Endothelial cell of umbilical vein (primary cell): ENCODE measurements at regions of chr3 and their contacts with region 1.

Region 1: GRCh38 chr3:192566706-192567290 is 160.5 kb downstream of the FGF12 start:
- DNase-seq: peak; percentile 72
- H3K4me3 ChIP-seq: no peak overlapping the region
- H3K27ac ChIP-seq: no peak overlapping the region
- H3K4me1 ChIP-seq: no peaks in the 10 kb centered on the region
- H3K27me3 ChIP-seq: peaks cover 3 to 10% of the 10 kb centered on the region in 2 experiments
- CTCF ChIP-seq: peak; percentile 52
- POLR2A ChIP-seq: no peak

Region 2: GRCh38 chr3:192422321-192423002 is 144.3 kb before region 1 on chr3:
- CTCF ChIA-PET with region 1: no interaction called
- POLR2A ChIA-PET with region 1: no interaction called
- dilution Hi-C with region 1: no loop called
- intact Hi-C with region 1: no loop called
- DNase-seq: peak; percentile 27
- H3K4me3 ChIP-seq: no peak overlapping the region
- H3K27ac ChIP-seq: no peak overlapping the region
- H3K4me1 ChIP-seq: peaks cover 13% of the 10 kb centered on the region
- H3K27me3 ChIP-seq: no peaks in the 10 kb centered on the region
- CTCF ChIP-seq: no peak
- POLR2A ChIP-seq: no peak

Region 3: DNA sequence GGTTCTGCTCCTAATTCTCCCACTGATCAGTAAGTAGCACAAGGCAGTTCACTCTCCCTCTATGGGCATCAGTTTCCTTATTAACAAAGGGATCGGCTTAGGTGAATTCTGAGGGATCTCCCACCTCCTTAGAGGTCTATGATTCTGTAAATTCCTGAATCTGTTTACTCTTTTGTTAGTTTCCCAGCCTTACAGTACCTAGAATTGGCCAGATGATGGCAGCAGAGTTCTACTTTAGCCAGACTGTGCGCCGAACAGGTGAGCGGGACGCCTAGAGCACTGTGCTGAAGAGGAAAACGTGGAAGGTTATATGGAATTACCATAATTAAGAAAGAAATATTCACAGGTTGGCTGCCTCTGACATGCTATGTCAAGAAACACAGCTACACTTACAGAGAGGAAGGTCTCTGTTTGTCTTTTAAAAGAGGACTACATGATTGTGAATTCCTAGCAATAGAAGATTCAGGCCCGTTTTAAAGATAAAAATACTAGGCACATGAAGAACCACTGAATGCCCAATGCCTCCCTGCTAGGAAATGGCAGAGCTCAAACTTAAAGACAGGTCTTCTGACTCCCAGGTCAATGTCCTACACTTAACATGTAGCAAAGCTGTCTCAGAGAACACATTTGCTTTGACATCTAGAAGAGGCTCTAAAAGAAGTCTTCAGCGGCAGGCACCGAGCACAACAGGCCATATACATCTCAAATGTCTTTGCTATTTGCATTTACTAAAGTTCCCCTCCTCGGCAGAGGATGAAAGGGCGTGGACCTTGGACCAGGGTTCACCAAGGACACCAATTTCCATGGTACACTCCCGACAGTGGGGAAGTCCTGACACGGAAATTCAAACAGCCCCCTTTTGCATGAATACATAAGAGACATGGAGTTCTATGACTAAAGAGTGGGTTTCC is 99.3 kb before region 1 on chr3:
- CTCF ChIA-PET with region 1: interaction called, 4 read pairs
- POLR2A ChIA-PET with region 1: no interaction called
- dilution Hi-C with region 1: no loop called
- intact Hi-C with region 1: loop called (anchors 1 kb)
- DNase-seq: peak; percentile 61
- H3K4me3 ChIP-seq: no peak overlapping the region
- H3K27ac ChIP-seq: no peak overlapping the region
- H3K4me1 ChIP-seq: no peaks in the 10 kb centered on the region
- H3K27me3 ChIP-seq: peaks cover 9 to 17% of the 10 kb centered on the region in 2 experiments
- CTCF ChIP-seq: peak; percentile 77
- POLR2A ChIP-seq: no peak

Region 4: DNA sequence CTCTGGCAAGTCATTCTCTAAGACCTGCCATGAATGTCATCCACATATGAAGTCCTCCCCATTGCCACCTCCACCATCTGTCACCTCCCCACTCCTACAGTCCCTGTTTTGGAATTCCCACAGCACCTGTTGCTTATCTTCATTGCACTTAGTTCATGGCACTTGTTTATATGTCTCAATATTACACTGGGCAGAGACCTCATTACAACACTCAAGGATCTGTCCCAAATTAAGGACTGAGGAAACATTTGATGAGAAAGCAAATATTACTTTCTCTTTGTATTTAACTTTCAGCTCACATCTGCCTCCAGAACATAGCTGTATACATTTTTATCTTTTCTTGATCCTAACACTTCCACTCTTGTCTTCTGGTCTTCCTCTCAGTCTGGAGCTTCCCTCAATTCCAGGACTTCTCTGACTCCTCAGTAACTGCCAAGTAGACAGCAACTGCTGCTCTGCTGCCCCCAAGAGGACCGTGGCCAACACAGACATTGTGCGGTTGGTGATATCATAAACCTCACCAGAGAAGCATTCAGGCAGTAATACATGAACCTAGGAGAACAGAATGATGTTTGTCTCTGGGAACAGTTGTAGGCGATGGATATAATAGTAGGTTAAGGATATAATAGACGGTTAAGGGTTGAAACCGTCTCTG is 205.6 kb after region 1 on chr3:
- CTCF ChIA-PET with region 1: interaction called, 3 read pairs
- POLR2A ChIA-PET with region 1: no interaction called
- dilution Hi-C with region 1: no loop called
- intact Hi-C with region 1: loop called (anchors 1 kb)
- DNase-seq: peak; percentile 19
- H3K4me3 ChIP-seq: no peak overlapping the region
- H3K27ac ChIP-seq: no peak overlapping the region
- H3K4me1 ChIP-seq: no peaks in the 10 kb centered on the region
- H3K27me3 ChIP-seq: no peaks in the 10 kb centered on the region
- CTCF ChIP-seq: peak; percentile 24 to 48
- POLR2A ChIP-seq: no peak

Region 5: GRCh38 chr3:192802957-192803899 is 236.4 kb after region 1 on chr3:
- CTCF ChIA-PET with region 1: interaction called, 46 read pairs
- POLR2A ChIA-PET with region 1: no interaction called
- dilution Hi-C with region 1: no loop called
- intact Hi-C with region 1: loop called (anchors 1 kb)
- DNase-seq: peak; percentile 49
- H3K4me3 ChIP-seq: no peak overlapping the region
- H3K27ac ChIP-seq: no peak overlapping the region
- H3K4me1 ChIP-seq: no peaks in the 10 kb centered on the region
- H3K27me3 ChIP-seq: no peaks in the 10 kb centered on the region
- CTCF ChIP-seq: peak; percentile 29 to 51
- POLR2A ChIP-seq: no peak

Region 6: DNA sequence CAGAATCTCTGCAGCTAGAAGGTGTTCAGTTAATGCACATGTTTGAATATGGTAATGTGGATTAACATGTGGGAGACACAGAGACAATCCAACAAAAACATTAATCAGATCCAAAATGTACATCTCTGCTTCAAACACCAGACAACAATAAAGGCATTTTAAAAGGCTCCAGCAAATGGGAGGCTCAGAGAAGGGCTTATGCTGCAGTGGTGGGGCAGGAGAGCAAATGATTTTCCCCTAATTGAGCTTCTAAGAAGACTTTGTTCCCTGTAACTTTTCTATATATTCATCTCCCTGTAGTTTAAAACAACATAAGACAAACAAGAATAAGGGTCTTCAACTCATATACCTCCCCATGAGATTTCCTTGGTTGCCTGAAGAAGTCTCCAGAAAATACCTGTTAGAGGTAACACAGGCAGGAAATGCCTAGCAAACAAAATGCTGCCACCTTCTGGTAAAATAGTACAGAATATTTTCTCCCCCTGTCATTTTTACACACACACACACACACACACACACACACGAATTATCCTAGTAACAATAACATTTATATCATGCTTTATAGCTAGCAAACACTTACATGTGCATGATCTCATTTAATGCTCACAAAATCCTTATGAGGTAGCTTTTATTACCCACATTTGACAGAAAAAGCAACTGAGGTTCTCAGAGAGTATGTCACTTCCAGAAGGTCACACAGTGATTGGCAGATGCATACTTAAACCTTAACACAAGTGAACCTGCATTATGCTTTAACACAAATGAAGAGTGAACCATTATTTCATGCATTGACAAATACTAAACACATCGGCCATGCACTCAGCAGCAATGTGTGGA is 474.3 kb after region 1 on chr3:
- CTCF ChIA-PET with region 1: interaction called, 3 read pairs
- POLR2A ChIA-PET with region 1: no interaction called
- dilution Hi-C with region 1: no loop called
- intact Hi-C with region 1: loop called (anchors 2 kb)
- DNase-seq: peak; percentile 43
- H3K4me3 ChIP-seq: no peak overlapping the region
- H3K27ac ChIP-seq: no peak overlapping the region
- H3K4me1 ChIP-seq: no peaks in the 10 kb centered on the region
- H3K27me3 ChIP-seq: no peaks in the 10 kb centered on the region
- CTCF ChIP-seq: peak; percentile 15
- POLR2A ChIP-seq: no peak

Region 7: DNA sequence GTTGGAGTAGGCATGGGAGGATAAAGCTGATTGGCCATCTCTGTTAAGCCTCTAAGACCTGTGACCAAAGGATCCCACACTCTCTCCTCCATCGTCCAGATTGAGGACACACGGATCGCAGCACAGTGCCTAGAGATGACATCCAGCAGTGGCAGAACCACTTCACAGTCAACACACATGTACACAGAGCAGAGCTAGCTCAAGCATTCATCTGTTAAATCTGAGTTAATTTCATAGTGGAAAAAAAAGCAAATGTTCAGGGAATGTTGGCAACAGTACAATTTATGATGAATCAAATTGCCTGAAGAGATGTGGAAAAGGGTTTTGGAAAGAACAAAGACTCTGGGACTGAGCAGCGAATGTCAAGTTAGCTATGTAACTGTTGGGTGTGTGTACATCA is 566.2 kb after region 1 on chr3:
- CTCF ChIA-PET with region 1: no interaction called
- POLR2A ChIA-PET with region 1: no interaction called
- dilution Hi-C with region 1: no loop called
- intact Hi-C with region 1: no loop called
- DNase-seq: peak; percentile 4
- H3K4me3 ChIP-seq: no peak overlapping the region
- H3K27ac ChIP-seq: no peak overlapping the region
- H3K4me1 ChIP-seq: no peaks in the 10 kb centered on the region
- H3K27me3 ChIP-seq: peaks cover 0 to 5% of the 10 kb centered on the region in 2 experiments
- CTCF ChIP-seq: no peak
- POLR2A ChIP-seq: no peak

Region 8: DNA sequence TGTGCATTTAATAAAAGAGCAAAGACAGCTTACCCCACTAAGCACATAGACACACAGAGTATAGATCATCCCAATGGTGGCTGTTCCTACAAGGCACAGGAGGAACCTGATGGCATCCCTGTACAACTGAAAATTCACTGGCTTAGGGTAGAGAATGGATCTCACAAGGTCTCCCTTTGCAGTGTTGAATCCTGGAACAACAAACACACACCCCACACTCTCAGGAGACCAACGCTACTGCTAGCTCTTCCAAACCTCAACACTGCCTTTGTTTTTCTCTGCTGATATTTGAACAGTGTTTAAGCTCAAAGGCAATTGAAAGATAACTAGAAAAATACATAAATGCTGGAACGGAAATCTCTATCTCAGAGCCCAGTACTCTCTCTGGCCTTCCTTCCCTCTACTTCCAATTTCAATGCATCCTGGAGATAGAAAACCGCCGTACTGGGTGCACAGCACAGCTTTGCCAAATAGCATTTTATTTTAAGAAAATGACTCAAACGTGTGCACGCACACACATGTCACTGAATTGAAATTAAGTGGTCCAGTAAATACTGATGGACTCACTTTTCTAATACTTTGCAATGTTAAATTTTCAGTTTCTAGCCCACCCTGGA is 899.3 kb after region 1 on chr3:
- CTCF ChIA-PET with region 1: no interaction called
- POLR2A ChIA-PET with region 1: no interaction called
- dilution Hi-C with region 1: no loop called
- intact Hi-C with region 1: loop called (anchors 2 kb)
- DNase-seq: no peak
- H3K4me3 ChIP-seq: no peak overlapping the region
- H3K27ac ChIP-seq: no peak overlapping the region
- H3K4me1 ChIP-seq: peaks cover 5% of the 10 kb centered on the region
- H3K27me3 ChIP-seq: peaks cover 0 to 2% of the 10 kb centered on the region in 2 experiments
- CTCF ChIP-seq: no peak
- POLR2A ChIP-seq: no peak

Region 9: DNA sequence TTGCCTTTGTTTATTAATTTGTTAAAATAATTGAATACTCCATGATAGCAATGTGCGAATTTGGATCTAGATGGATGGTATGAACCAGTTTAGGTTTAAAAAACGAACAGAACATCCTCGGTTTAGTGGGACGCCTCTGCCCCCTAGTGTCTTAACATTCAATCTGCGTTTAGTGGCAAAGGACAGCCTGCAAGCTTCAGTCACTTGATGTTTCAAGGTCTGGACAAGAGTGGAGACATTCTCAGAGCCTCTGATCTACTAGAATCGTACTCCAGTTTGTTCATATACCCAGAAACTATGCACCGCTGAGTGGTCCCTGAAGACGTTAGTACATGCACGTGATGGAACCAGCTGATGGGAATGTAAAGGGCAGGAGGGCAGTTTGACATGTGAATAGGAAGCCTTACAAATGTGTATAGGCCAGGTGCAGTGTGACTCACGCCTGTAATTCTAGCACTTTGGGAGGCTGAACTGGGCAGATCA is 1005.7 kb after region 1 on chr3:
- CTCF ChIA-PET with region 1: interaction called, 18 read pairs
- POLR2A ChIA-PET with region 1: interaction called, 3 read pairs
- dilution Hi-C with region 1: no loop called
- intact Hi-C with region 1: loop called (anchors 1 kb)
- DNase-seq: peak; percentile 69
- H3K4me3 ChIP-seq: no peak overlapping the region
- H3K27ac ChIP-seq: no peak overlapping the region
- H3K4me1 ChIP-seq: no peaks in the 10 kb centered on the region
- H3K27me3 ChIP-seq: peaks cover 1 to 3% of the 10 kb centered on the region in 2 experiments
- CTCF ChIP-seq: peak; percentile 76 to 77
- POLR2A ChIP-seq: no peak